Dorsolateral prefrontal cortex (tissue), 120 donors: ENCODE measurements at regions of chr7 and their contacts with region 1.

Region 1: DNA sequence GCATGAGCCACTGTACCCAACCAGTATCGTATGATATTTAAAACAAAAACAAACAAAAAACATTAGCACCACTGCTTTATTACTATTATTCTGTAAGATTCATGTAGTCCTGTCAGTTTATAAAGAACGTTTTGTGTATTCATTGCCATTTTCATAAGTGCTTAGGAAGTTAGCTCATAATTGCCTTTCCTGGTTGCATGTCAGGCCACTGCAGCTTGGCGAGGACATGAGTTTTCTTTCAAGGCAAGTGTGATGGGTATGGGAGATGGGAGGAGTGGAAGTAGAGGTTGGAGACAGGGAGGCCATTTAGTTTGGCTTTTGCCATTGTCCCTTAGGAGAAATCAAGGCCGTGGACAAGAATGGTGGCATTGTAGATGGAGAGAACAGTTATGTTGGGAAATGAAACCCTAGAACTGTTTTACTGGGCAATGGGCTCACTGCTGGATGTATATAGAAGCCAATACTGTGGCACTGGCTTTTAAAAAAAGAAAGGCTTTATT is 48.9 kb downstream of the TYW1 start:
- DNase-seq: no peak
- H3K4me3 ChIP-seq: no peak overlapping the region
- H3K27ac ChIP-seq: peak overlapping the region in 19 of 59 donors; percentile 5 to 64 (median 31)
- H3K27me3 ChIP-seq: no peaks in the 10 kb centered on the region
- CTCF ChIP-seq: no peak

Region 2: GRCh38 chr7:67302113-67303039 is 256.8 kb after region 1 on chr7:
- intact Hi-C with region 1: loop called (anchors 5 to 10 kb)
- DNase-seq: peak; percentile 96 to 99 (median 99)
- H3K4me3 ChIP-seq: peak overlapping the region; percentile 68 to 99 (median 91)
- H3K27ac ChIP-seq: peak overlapping the region; percentile 53 to 99 (median 94)
- H3K27me3 ChIP-seq: no peaks in the 10 kb centered on the region
- CTCF ChIP-seq: peak in 50 of 56 donors; percentile 13 to 60 (median 40)

Region 3: GRCh38 chr7:67309764-67310549 is 264.4 kb after region 1 on chr7:
- intact Hi-C with region 1: loop called (anchors 5 to 10 kb)
- DNase-seq: no peak
- H3K4me3 ChIP-seq: no peak overlapping the region
- H3K27ac ChIP-seq: no peak overlapping the region
- H3K27me3 ChIP-seq: no peaks in the 10 kb centered on the region
- CTCF ChIP-seq: no peak